ENCODE measurements at regions of chr2 and their contacts with region 1.

Region 1: DNA sequence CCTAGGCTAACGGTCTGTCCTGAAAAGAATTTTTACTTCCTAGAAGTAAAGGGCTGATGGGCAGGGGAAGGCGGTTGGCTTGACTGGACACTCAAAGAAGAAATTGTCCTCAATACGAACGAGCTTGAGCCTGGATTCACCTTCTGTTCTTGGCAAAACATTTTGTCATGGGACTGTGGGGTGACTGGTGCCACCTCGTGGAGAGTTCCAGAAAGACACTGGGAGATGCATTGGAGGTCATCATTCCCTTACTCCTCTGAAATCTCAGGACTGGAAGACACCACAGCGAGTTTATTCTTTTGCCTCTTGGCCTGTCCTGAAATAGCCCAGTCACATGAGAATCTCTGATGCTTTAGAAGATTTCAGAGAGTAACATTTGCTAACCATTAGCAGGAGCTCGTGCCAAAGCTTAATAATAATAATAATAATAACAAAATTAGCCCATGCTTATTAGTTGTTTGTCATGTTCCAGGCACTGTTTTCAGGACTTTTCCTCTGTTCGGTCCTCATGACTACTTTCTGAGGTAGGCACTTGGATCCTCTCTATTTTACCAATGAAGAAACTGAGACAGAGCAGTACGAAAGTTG is 44.5 kb downstream of the TMEM182 start:
- DNase-seq: peak in 11 of 14 experiments; percentile 1 to 46 (median 12)
- ATAC-seq: no peak
- H3K4me3 ChIP-seq: no peak overlapping the region
- H3K4me3 Mint-ChIP-seq: no peak overlapping the region
- H3K27ac ChIP-seq: no peak overlapping the region
- H3K27ac Mint-ChIP-seq: no peak overlapping the region
- H3K4me1 ChIP-seq: peaks cover 14% of the 10 kb centered on the region
- H3K4me1 Mint-ChIP-seq: peaks cover 19% of the 10 kb centered on the region
- H3K27me3 ChIP-seq: no peaks in the 10 kb centered on the region
- H3K27me3 Mint-ChIP-seq: no peaks in the 10 kb centered on the region
- CTCF ChIP-seq: peak; percentile 77

Region 2: DNA sequence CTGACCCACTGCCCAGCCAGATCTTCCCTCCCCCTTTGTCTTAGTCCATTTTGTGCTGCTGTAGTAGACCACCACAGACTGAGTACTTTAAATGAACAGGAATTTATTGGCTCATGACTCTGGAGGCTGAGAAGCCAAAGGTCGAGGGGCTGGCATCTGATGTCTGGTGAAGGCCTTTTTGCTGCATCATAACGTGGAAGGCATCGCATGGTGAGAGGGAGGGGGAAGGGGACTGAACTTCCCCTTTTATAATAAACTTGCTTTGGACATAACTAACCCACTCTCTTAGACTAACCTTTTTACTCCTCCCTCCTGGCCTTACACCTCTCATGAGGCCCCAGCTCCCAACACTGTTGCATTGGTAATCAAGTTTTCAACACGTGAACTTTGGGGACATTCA is 1025.0 kb before region 1 on chr2:
- CTCF ChIA-PET with region 1: no interaction called
- POLR2A ChIA-PET with region 1: no interaction called
- intact Hi-C with region 1: no loop called
- DNase-seq: peak in 2 of 14 experiments; percentile 20 to 31
- ATAC-seq: no peak
- H3K4me3 ChIP-seq: no peak overlapping the region
- H3K4me3 Mint-ChIP-seq: peak overlapping the region; percentile 55
- H3K27ac ChIP-seq: no peak overlapping the region
- H3K27ac Mint-ChIP-seq: peak overlapping the region; percentile 4
- H3K4me1 ChIP-seq: peaks cover 40% of the 10 kb centered on the region
- H3K4me1 Mint-ChIP-seq: peaks cover 89% of the 10 kb centered on the region
- H3K27me3 ChIP-seq: no peaks in the 10 kb centered on the region
- H3K27me3 Mint-ChIP-seq: no peaks in the 10 kb centered on the region
- CTCF ChIP-seq: no peak

Region 3: DNA sequence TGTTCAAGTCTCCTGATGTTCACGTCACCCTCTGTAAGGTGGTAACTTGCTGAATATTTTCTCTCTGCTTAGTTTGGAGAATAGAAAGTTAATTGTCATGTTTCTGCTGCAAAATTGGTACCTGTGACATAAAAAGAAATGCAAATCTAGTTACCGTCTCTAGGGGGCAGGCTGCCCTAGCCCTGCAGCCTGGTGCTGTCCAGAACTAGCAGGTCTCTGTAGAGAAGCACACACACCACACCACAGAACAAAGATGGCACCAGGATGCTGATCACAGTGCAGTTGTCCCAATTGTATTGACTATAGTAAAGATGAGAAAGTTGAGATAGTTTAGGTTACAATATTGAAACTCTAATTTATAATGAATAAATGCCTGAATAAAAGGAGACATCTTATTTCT is 286.3 kb before region 1 on chr2:
- CTCF ChIA-PET with region 1: no interaction called
- POLR2A ChIA-PET with region 1: no interaction called
- intact Hi-C with region 1: loop called in 1 of 2 experiments (anchors 2 kb)
- DNase-seq: peak in 3 of 14 experiments; percentile 32 to 41 (median 32)
- ATAC-seq: no peak
- H3K4me3 ChIP-seq: no peak overlapping the region
- H3K4me3 Mint-ChIP-seq: no peak overlapping the region
- H3K27ac ChIP-seq: no peak overlapping the region
- H3K27ac Mint-ChIP-seq: no peak overlapping the region
- H3K4me1 ChIP-seq: no peaks in the 10 kb centered on the region
- H3K4me1 Mint-ChIP-seq: no peaks in the 10 kb centered on the region
- H3K27me3 ChIP-seq: no peaks in the 10 kb centered on the region
- H3K27me3 Mint-ChIP-seq: peaks cover 2% of the 10 kb centered on the region
- CTCF ChIP-seq: peak; percentile 28

Region 4: GRCh38 chr2:102726128-102727087 is 79.9 kb before region 1 on chr2:
- CTCF ChIA-PET with region 1: no interaction called
- POLR2A ChIA-PET with region 1: no interaction called
- intact Hi-C with region 1: no loop called
- DNase-seq: no peak
- ATAC-seq: no peak
- H3K4me3 ChIP-seq: no peak overlapping the region
- H3K4me3 Mint-ChIP-seq: no peak overlapping the region
- H3K27ac ChIP-seq: no peak overlapping the region
- H3K27ac Mint-ChIP-seq: no peak overlapping the region
- H3K4me1 ChIP-seq: no peaks in the 10 kb centered on the region
- H3K4me1 Mint-ChIP-seq: no peaks in the 10 kb centered on the region
- H3K27me3 ChIP-seq: no peaks in the 10 kb centered on the region
- H3K27me3 Mint-ChIP-seq: no peaks in the 10 kb centered on the region
- CTCF ChIP-seq: no peak

Region 5: GRCh38 chr2:102753563-102754159 is 52.7 kb before region 1 on chr2:
- CTCF ChIA-PET with region 1: interaction called, 3 read pairs
- POLR2A ChIA-PET with region 1: no interaction called
- intact Hi-C with region 1: loop called (anchors 2 kb)
- DNase-seq: peak in 5 of 14 experiments; percentile 11 to 63 (median 41)
- ATAC-seq: peak; percentile 51
- H3K4me3 ChIP-seq: no peak overlapping the region
- H3K4me3 Mint-ChIP-seq: no peak overlapping the region
- H3K27ac ChIP-seq: no peak overlapping the region
- H3K27ac Mint-ChIP-seq: no peak overlapping the region
- H3K4me1 ChIP-seq: no peaks in the 10 kb centered on the region
- H3K4me1 Mint-ChIP-seq: no peaks in the 10 kb centered on the region
- H3K27me3 ChIP-seq: no peaks in the 10 kb centered on the region
- H3K27me3 Mint-ChIP-seq: no peaks in the 10 kb centered on the region
- CTCF ChIP-seq: peak; percentile 96

Region 6: DNA sequence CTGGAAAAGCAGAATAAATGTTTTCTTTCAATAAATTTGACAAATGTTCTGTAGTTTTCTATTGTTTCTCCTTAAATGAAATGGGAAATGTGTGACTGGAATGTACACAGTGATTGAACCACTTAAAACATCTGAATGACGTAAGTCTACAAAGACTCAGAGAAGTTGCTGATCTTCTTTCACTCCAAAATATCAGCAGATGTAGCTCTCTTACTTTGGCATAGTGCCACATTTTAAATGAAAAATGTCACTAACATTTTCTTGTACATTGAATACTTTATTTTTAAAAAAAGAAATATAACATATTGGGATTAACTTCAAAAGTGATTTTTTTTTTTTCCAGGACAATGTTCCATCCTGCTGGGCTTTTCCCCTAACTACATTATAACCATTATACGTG is 521.0 kb after region 1 on chr2:
- CTCF ChIA-PET with region 1: no interaction called
- POLR2A ChIA-PET with region 1: no interaction called
- intact Hi-C with region 1: no loop called
- DNase-seq: no peak
- ATAC-seq: no peak
- H3K4me3 ChIP-seq: no peak overlapping the region
- H3K4me3 Mint-ChIP-seq: no peak overlapping the region
- H3K27ac ChIP-seq: no peak overlapping the region
- H3K27ac Mint-ChIP-seq: no peak overlapping the region
- H3K4me1 ChIP-seq: no peaks in the 10 kb centered on the region
- H3K4me1 Mint-ChIP-seq: no peaks in the 10 kb centered on the region
- H3K27me3 ChIP-seq: no peaks in the 10 kb centered on the region
- H3K27me3 Mint-ChIP-seq: no peaks in the 10 kb centered on the region
- CTCF ChIP-seq: no peak

Measured in CD4-positive, alpha-beta T cell (primary cell).